Activated CD4-positive, alpha-beta memory T cell treated with anti-CD3 and anti-CD28 coated beads, Interleukin-2, amount 10 ng/mL, durations not matched to agents 7 days and 5 days (primary cell): ENCODE measurements at regions of chr17 and their contacts with region 1.

Region 1: DNA sequence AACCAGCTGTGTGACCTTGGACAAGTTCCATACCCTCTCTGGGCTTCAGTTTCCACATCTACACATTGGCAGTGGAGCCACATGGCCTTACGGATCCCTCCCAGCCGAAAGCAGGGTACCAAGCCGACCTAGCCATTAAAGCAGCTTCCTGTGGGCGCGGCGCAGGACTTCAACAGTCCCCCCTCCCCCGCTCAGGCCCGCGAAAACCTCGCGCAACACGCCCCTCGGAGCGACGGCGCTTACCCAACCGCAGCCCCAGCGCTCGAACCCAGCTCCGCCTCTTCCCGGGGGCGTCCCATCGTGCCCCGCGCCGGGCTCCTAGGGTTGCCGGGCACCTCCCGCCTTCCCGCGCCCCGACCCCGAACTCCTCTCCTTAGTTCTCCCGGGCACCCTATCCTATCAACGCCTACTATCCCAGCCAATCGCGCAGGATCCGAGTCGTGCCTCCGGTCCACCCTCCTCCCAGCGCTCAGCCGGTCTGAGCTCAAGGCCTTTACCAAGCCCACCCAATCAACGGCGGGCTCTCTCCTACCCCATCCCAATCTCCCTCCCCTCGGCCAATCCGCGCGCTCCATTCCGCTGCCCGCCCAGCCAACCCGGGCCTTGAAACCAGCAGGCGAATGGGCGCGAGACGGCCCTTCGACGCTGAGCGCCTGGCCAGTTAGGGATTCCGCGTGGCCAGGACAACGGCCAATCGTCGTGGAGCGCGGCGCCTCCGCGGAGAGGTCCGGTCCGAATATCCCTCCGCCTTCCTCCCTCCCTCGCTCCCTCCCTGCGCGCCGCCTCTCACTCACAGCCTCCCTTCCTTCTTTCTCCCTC is at the start of gene KPNB1:
- DNase-seq: peak; percentile 99
- H3K4me3 Mint-ChIP-seq: peak within 1 kb of the TSS; percentile 91
- H3K27ac Mint-ChIP-seq: peak within 1 kb of the TSS; percentile 96
- H3K4me1 Mint-ChIP-seq: peaks cover 50% of the 10 kb centered on the region
- H3K27me3 Mint-ChIP-seq: no peaks in the 10 kb centered on the region
- total RNA-seq, gene KPNB1: 329 to 334 TPM

Region 2: DNA sequence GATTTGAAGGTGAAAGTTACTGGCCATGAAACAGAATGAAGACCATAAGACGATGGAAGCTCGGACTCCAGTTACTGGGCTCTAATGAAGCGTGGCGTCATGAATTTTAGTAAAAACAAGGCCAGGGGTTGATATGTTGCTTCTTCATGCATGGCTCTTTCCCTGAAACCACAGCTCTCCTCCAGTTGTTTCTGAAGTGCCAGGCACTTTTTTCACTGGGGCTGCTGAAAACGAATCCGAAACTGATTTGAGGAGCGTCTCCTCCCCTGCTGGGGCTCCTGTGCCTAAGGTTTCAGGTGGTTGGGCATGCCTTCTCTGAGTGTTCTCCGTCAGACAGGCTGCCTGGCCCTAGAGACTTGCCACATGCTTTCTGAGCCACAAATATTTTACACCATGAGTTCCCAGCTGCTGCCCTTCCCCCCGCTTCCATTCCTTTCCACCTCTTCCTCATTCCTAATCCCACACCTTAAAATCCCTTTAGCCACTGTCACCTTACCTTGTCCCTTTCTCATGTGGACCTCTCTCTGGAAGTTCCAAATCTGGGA is 443.9 kb before region 1 on chr17:
- CTCF ChIA-PET with region 1: no interaction called
- POLR2A ChIA-PET with region 1: interaction called, 13 read pairs
- DNase-seq: peak; percentile 81
- H3K4me3 Mint-ChIP-seq: peak overlapping the region; percentile 70
- H3K27ac Mint-ChIP-seq: peak overlapping the region; percentile 96
- H3K4me1 Mint-ChIP-seq: peaks cover 49% of the 10 kb centered on the region
- H3K27me3 Mint-ChIP-seq: no peaks in the 10 kb centered on the region

Region 3: DNA sequence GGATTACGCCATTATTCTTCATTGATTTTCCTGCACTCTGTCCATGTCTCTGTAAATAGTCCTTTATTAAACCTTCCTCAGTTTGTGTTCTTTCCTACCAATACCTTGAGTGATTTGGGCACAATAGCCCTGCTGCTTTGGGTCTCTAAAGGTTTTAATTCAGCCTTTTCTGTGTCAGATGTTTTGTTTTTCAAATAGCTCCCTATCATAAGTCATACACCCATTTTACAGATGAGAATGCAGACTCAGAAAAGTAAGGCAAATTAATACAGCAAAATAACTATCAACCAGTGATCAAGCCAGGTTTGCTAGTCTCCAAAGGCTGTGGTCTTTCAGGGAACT is 24.7 kb before region 1 on chr17:
- CTCF ChIA-PET with region 1: interaction called, 15 read pairs
- POLR2A ChIA-PET with region 1: interaction called, 10 read pairs
- DNase-seq: no peak
- H3K4me3 Mint-ChIP-seq: no peak overlapping the region
- H3K27ac Mint-ChIP-seq: no peak overlapping the region
- H3K4me1 Mint-ChIP-seq: peaks cover 16% of the 10 kb centered on the region
- H3K27me3 Mint-ChIP-seq: no peaks in the 10 kb centered on the region

Region 4: DNA sequence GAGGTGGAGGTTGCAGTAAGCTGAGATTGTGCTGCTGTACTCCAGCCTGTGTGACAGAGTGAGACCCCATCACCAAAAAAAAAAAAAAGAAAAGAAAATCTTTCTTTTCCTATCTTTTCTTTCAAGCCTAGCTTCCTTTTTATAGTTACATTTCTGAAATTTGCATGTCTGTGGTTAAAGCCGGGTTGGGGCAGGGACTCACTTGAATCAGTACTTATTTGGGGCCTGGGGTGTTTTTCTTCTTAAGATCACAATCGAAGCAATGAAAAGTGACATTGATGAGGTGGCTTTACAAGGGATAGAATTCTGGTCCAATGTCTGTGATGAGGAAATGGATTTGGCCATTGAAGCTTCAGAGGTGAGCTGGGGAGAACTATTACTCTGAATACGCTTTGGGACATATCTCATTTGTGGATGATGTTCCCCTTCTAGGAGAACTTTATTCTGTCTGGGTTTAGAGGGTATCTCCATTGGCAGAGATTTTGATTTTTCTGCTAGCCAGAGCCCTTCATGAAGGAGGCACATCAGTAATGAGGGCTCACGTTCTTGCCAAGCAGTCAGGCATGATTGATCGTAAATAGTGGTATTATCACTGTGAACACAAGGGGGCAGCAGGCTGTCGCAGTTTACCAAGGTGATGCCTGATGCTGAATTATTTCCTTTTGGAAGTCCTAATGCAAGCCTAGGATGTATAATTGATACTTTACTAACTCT is 14.7 kb after region 1 on chr17:
- CTCF ChIA-PET with region 1: interaction called, 59 read pairs
- POLR2A ChIA-PET with region 1: interaction called, 86 read pairs
- DNase-seq: peak; percentile 67
- H3K4me3 Mint-ChIP-seq: no peak overlapping the region
- H3K27ac Mint-ChIP-seq: peak overlapping the region; percentile 71
- H3K4me1 Mint-ChIP-seq: peaks cover 50% of the 10 kb centered on the region
- H3K27me3 Mint-ChIP-seq: no peaks in the 10 kb centered on the region

Region 5: GRCh38 chr17:47757386-47757785 is 108.0 kb after region 1 on chr17:
- CTCF ChIA-PET with region 1: no interaction called
- POLR2A ChIA-PET with region 1: no interaction called
- DNase-seq: no peak
- H3K4me3 Mint-ChIP-seq: no peak overlapping the region
- H3K27ac Mint-ChIP-seq: no peak overlapping the region
- H3K4me1 Mint-ChIP-seq: no peaks in the 10 kb centered on the region
- H3K27me3 Mint-ChIP-seq: peaks cover 23% of the 10 kb centered on the region

Region 6: DNA sequence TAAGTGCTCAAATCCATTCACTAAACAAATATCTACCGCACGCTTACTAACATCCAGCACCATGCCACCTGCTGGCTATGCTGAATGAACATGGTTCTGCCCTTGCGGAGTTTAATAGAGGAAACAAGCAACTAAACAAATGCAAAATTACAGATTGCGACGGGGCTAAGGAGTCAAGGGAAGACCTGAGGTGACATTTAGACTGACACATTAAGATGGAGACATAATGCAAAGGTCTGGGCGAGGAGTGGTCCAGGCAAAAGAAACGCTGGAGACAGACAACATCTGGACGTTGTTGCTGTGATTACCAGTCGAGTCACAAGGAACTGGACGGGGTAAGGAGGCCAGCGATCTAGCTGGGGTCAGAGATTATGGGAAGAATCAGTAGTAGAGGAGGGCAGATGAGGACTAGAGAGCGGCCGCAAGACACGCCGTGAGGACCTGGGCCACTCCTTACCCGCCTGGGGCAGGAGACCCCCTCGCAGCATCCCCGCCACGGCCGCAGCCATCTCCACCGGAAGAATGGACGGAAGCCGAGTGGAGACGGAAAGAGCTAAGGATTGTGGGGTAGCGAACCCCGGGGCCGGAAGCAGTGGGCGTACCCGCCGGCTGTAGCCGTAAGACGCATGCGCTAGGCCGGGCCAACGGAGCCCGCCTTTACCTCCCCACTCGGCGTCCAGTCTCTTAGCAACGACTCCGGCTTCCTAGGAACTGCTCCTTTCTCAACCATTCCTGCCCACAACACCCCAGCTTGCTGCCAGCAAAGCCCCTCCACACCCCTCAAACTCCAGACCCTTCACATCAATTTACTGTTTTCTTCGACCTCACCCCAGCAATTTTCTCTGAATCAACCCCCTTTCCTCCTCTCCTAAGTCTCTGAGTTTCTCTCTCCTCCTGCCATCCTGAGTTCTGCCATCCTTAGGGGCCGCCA is 181.9 kb after region 1 on chr17 and contains the starts of genes LRRC46 and MRPL10:
- CTCF ChIA-PET with region 1: no interaction called
- POLR2A ChIA-PET with region 1: interaction called, 41 read pairs
- DNase-seq: peak; percentile 94
- H3K4me3 Mint-ChIP-seq: peak within 1 kb of the TSS; percentile 90
- H3K27ac Mint-ChIP-seq: peak within 1 kb of the TSS; percentile 100
- H3K4me1 Mint-ChIP-seq: peaks cover 69% of the 10 kb centered on the region
- H3K27me3 Mint-ChIP-seq: no peaks in the 10 kb centered on the region
- total RNA-seq, gene LRRC46: 0.45 to 0.53 TPM
- total RNA-seq, gene MRPL10: 91.5 to 95.7 TPM